CD8-positive, alpha-beta T cell (primary cell): ENCODE measurements at regions of chr12 and their contacts with region 1.

Region 1: GRCh38 chr12:67937836-67938235 is 51.4 kb upstream of the IFNG-AS1 start:
- DNase-seq: peak in 3 of 9 experiments; percentile 17 to 50 (median 34)
- ATAC-seq: no peak
- H3K4me3 ChIP-seq: no peak overlapping the region
- H3K4me3 Mint-ChIP-seq: no peak overlapping the region
- H3K27ac ChIP-seq: no peak overlapping the region
- H3K27ac Mint-ChIP-seq: no peak overlapping the region
- H3K4me1 ChIP-seq: no peaks in the 10 kb centered on the region
- H3K4me1 Mint-ChIP-seq: peaks cover under 1% of the 10 kb centered on the region
- H3K27me3 ChIP-seq: no peaks in the 10 kb centered on the region
- H3K27me3 Mint-ChIP-seq: no peaks in the 10 kb centered on the region
- CTCF ChIP-seq: no peak

Region 2: GRCh38 chr12:67885375-67886169 is 52.3 kb before region 1 on chr12:
- CTCF ChIA-PET with region 1: interaction called, 3 read pairs
- POLR2A ChIA-PET with region 1: no interaction called
- intact Hi-C with region 1: loop called in 1 of 2 experiments (anchors 10 kb)
- DNase-seq: no peak
- ATAC-seq: no peak
- H3K4me3 ChIP-seq: no peak overlapping the region
- H3K4me3 Mint-ChIP-seq: no peak overlapping the region
- H3K27ac ChIP-seq: no peak overlapping the region
- H3K27ac Mint-ChIP-seq: no peak overlapping the region
- H3K4me1 ChIP-seq: no peaks in the 10 kb centered on the region
- H3K4me1 Mint-ChIP-seq: peaks cover 1% of the 10 kb centered on the region
- H3K27me3 ChIP-seq: no peaks in the 10 kb centered on the region
- H3K27me3 Mint-ChIP-seq: no peaks in the 10 kb centered on the region
- CTCF ChIP-seq: no peak

Region 3: DNA sequence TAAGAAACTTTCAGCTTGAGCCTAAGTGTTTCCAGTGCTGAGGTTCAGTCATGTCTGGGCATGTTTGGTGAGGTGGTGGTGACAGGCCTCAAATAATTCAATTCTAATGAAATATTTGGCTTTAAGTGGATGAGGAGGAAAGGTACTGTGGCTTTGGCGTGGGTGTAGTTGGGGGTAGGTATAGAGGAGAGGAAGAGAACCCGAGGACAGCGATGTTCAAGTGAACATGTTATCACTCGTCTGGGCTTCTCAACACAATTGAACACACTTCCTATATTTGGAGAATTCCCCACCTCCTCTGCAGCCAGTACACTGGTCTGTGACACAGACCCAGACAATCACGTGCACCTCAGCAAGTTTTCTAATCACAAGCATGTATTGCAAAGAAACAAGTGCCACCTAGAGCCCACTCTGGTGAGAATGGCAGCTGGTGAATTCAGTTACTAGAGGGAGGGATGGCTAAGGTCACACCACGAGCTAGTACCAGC is 104.4 kb after region 1 on chr12:
- CTCF ChIA-PET with region 1: no interaction called
- POLR2A ChIA-PET with region 1: no interaction called
- intact Hi-C with region 1: no loop called
- DNase-seq: peak in 3 of 9 experiments; percentile 6 to 59 (median 47)
- ATAC-seq: no peak
- H3K4me3 ChIP-seq: no peak overlapping the region
- H3K4me3 Mint-ChIP-seq: no peak overlapping the region
- H3K27ac ChIP-seq: no peak overlapping the region
- H3K27ac Mint-ChIP-seq: peak overlapping the region; percentile 8
- H3K4me1 ChIP-seq: no peaks in the 10 kb centered on the region
- H3K4me1 Mint-ChIP-seq: peaks cover 16% of the 10 kb centered on the region
- H3K27me3 ChIP-seq: no peaks in the 10 kb centered on the region
- H3K27me3 Mint-ChIP-seq: no peaks in the 10 kb centered on the region
- CTCF ChIP-seq: no peak

Region 4: GRCh38 chr12:68565375-68565903 is 627.6 kb after region 1 on chr12:
- CTCF ChIA-PET with region 1: no interaction called
- POLR2A ChIA-PET with region 1: no interaction called
- intact Hi-C with region 1: no loop called
- DNase-seq: peak in 2 of 9 experiments; percentile 20 to 35
- ATAC-seq: peak; percentile 40
- H3K4me3 ChIP-seq: no peak overlapping the region
- H3K4me3 Mint-ChIP-seq: no peak overlapping the region
- H3K27ac ChIP-seq: no peak overlapping the region
- H3K27ac Mint-ChIP-seq: no peak overlapping the region
- H3K4me1 ChIP-seq: peaks cover 17% of the 10 kb centered on the region
- H3K4me1 Mint-ChIP-seq: peaks cover 21% of the 10 kb centered on the region
- H3K27me3 ChIP-seq: no peaks in the 10 kb centered on the region
- H3K27me3 Mint-ChIP-seq: no peaks in the 10 kb centered on the region
- CTCF ChIP-seq: no peak

Region 5: GRCh38 chr12:69163681-69164362 is 1226.0 kb after region 1 on chr12:
- CTCF ChIA-PET with region 1: no interaction called
- POLR2A ChIA-PET with region 1: no interaction called
- intact Hi-C with region 1: no loop called
- DNase-seq: no peak
- ATAC-seq: no peak
- H3K4me3 ChIP-seq: no peak overlapping the region
- H3K4me3 Mint-ChIP-seq: no peak overlapping the region
- H3K27ac ChIP-seq: no peak overlapping the region
- H3K27ac Mint-ChIP-seq: no peak overlapping the region
- H3K4me1 ChIP-seq: no peaks in the 10 kb centered on the region
- H3K4me1 Mint-ChIP-seq: peaks cover 3% of the 10 kb centered on the region
- H3K27me3 ChIP-seq: no peaks in the 10 kb centered on the region
- H3K27me3 Mint-ChIP-seq: no peaks in the 10 kb centered on the region
- CTCF ChIP-seq: no peak